T-cell (primary cell): ENCODE measurements at regions of chr11 and their contacts with region 1.

Region 1: DNA sequence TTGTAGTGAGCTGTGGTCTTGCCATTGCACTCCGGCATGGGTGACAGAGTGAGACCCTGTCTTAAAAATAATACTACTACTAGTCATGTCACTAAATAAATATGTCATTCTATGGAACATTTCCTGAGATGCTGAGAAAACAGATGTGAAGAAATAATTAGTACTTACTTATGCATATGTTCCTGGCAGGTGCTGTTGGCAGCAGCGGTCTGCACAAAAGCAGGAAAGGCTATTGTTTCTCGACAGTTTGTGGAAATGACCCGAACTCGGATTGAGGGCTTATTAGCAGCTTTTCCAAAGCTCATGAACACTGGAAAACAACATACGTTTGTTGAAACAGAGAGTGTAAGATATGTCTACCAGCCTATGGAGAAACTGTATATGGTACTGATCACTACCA is 8.8 kb downstream of the ARCN1 start:
- DNase-seq: no peak
- ATAC-seq: no peak
- H3K4me3 ChIP-seq: no peak overlapping the region
- H3K4me3 Mint-ChIP-seq: no peak overlapping the region
- H3K27ac ChIP-seq: no peak overlapping the region
- H3K27ac Mint-ChIP-seq: no peak overlapping the region
- H3K4me1 ChIP-seq: peaks cover 0 to 16% of the 10 kb centered on the region in 2 experiments
- H3K4me1 Mint-ChIP-seq: peaks cover 18 to 37% (median 32%) of the 10 kb centered on the region in 3 donors
- H3K27me3 ChIP-seq: no peaks in the 10 kb centered on the region
- H3K27me3 Mint-ChIP-seq: no peaks in the 10 kb centered on the region

Region 2: GRCh38 chr11:118410055-118410745 is 170.9 kb before region 1 on chr11:
- CTCF ChIA-PET with region 1: no interaction called
- POLR2A ChIA-PET with region 1: no interaction called
- DNase-seq: no peak
- ATAC-seq: no peak
- H3K4me3 ChIP-seq: no peak overlapping the region
- H3K4me3 Mint-ChIP-seq: no peak overlapping the region
- H3K27ac ChIP-seq: no peak overlapping the region
- H3K27ac Mint-ChIP-seq: peak overlapping the region in 1 of 2 donors; percentile 44
- H3K4me1 ChIP-seq: peaks cover 0 to 3% of the 10 kb centered on the region in 2 experiments
- H3K4me1 Mint-ChIP-seq: peaks cover 22 to 34% (median 30%) of the 10 kb centered on the region in 3 donors
- H3K27me3 ChIP-seq: no peaks in the 10 kb centered on the region
- H3K27me3 Mint-ChIP-seq: no peaks in the 10 kb centered on the region

Region 3: GRCh38 chr11:118621071-118621783 is 40.2 kb after region 1 on chr11:
- CTCF ChIA-PET with region 1: interaction called in 1 of 2 experiments, 11 read pairs
- POLR2A ChIA-PET with region 1: no interaction called
- DNase-seq: peak in 10 of 35 experiments; percentile 7 to 31 (median 17)
- ATAC-seq: peak; percentile 52 to 80 (median 62)
- H3K4me3 ChIP-seq: peak overlapping the region in 1 of 2 donors; percentile 58
- H3K4me3 Mint-ChIP-seq: peak overlapping the region; percentile 36 to 77 (median 59)
- H3K27ac ChIP-seq: no peak overlapping the region
- H3K27ac Mint-ChIP-seq: no peak overlapping the region
- H3K4me1 ChIP-seq: peaks cover 0 to 15% of the 10 kb centered on the region in 2 experiments
- H3K4me1 Mint-ChIP-seq: peaks cover 5 to 13% (median 5%) of the 10 kb centered on the region in 3 donors
- H3K27me3 ChIP-seq: peaks cover 0 to 36% of the 10 kb centered on the region in 2 experiments
- H3K27me3 Mint-ChIP-seq: peaks cover 12 to 23% of the 10 kb centered on the region in 2 donors

Region 4: GRCh38 chr11:119030329-119031049 is 449.4 kb after region 1 on chr11 and contains the start of gene SLC37A4:
- CTCF ChIA-PET with region 1: no interaction called
- POLR2A ChIA-PET with region 1: no interaction called
- DNase-seq: peak; percentile 94 to 100 (median 97)
- ATAC-seq: peak; percentile 89 to 96 (median 92)
- H3K4me3 ChIP-seq: peak within 1 kb of the TSS; percentile 72 to 97
- H3K4me3 Mint-ChIP-seq: peak within 1 kb of the TSS; percentile 72 to 87 (median 78)
- H3K27ac ChIP-seq: peak within 1 kb of the TSS; percentile 72
- H3K27ac Mint-ChIP-seq: peak within 1 kb of the TSS; percentile 75 to 91
- H3K4me1 ChIP-seq: peaks cover 0 to 28% of the 10 kb centered on the region in 2 experiments
- H3K4me1 Mint-ChIP-seq: peaks cover 15 to 22% (median 17%) of the 10 kb centered on the region in 3 donors
- H3K27me3 ChIP-seq: no peaks in the 10 kb centered on the region
- H3K27me3 Mint-ChIP-seq: no peaks in the 10 kb centered on the region
- total RNA-seq, gene SLC37A4: 8.9 to 18.0 (median 15.4) TPM